K562 (cell line): ENCODE measurements at regions of chr11 and their contacts with region 1.

Region 1: GRCh38 chr11:46845740-46846509 is at the start of gene CKAP5:
- DNase-seq: peak; percentile 94 to 99 (median 94)
- ATAC-seq: peak; percentile 95
- H3K4me3 ChIP-seq: peak within 1 kb of the TSS; percentile 76
- H3K27ac ChIP-seq: peak within 1 kb of the TSS; percentile 93
- H3K4me1 ChIP-seq: peaks cover 6 to 18% of the 10 kb centered on the region in 2 experiments; a peak in 3 of 5 replicates
- H3K27me3 ChIP-seq: no peaks in the 10 kb centered on the region
- CTCF ChIP-seq: 0 out of 6 replicates have a peak, but pooled peaks of 2 of the 3 experiments have one; percentile 0 to 6
- EP300 ChIP-seq: peak; percentile 25
- POLR2A ChIP-seq: peak; percentile 90
- RAD21 ChIP-seq: no peak
- polyA plus RNA-seq, gene CKAP5: 60.1 to 75.7 TPM

Region 2: GRCh38 chr11:46826310-46827044 is 19.4 kb before region 1 on chr11:
- CTCF ChIA-PET with region 1: no interaction called
- POLR2A ChIA-PET with region 1: interaction called, 4 read pairs
- in situ Hi-C with region 1: no loop called
- intact Hi-C with region 1: loop called (anchors 2 kb)
- DNase-seq: peak; percentile 75 to 87 (median 80)
- ATAC-seq: peak; percentile 100
- H3K4me3 ChIP-seq: peak overlapping the region; percentile 49
- H3K27ac ChIP-seq: 0 out of 3 replicates have a peak overlapping the region, but pooled peaks have one; percentile 17
- H3K4me1 ChIP-seq: peaks cover 17 to 19% of the 10 kb centered on the region in 2 experiments; a peak in 4 of 5 replicates
- H3K27me3 ChIP-seq: no peaks in the 10 kb centered on the region
- CTCF ChIP-seq: peak in 1 of 3 experiments; percentile 9; a peak in 1 of 6 replicates
- EP300 ChIP-seq: no peak
- POLR2A ChIP-seq: no peak
- RAD21 ChIP-seq: no peak

Region 3: DNA sequence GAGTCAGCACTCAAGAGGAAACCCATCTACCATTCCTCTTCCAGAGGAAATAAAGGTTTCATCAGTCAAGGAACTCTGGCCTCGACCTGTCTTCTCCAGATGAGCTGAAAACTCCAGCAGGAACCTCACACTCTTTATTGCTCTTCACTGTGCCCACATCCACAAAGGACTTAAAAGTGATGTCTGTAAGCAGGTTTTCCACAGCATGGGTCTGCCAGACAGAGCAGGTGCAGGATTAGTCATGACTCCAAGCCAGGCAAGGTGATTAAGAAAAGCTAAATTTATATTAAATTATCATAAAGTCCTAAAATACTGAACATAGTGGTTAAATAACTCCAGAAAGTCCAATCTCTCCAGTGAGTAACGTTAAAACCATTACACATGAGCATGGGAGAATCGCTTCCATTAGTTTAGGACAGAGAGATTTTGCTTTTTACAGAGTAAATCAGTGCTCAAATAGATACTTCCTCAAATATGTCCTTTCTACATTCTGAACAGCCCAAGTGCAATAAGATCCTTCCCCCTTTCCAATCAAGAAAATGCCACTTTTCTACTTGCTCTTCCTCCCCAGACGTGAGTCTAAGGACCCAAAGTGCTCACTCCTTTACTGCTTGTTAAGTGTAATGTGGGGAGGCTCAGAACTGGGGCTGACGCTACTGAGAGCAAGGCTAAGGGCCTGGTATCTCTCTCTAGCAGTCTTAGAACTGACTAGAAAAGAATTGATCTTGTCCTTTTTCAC is 10.8 kb after region 1 on chr11:
- CTCF ChIA-PET with region 1: no interaction called
- POLR2A ChIA-PET with region 1: interaction called, 11 read pairs
- in situ Hi-C with region 1: no loop called
- intact Hi-C with region 1: no loop called
- DNase-seq: no peak
- ATAC-seq: no peak; the same call in 2 of the 3 replicates
- H3K4me3 ChIP-seq: no peak overlapping the region
- H3K27ac ChIP-seq: no peak overlapping the region
- H3K4me1 ChIP-seq: peaks cover 0 to 14% of the 10 kb centered on the region in 2 experiments; a peak in 2 of 5 replicates
- H3K27me3 ChIP-seq: no peaks in the 10 kb centered on the region
- CTCF ChIP-seq: no peak
- EP300 ChIP-seq: no peak
- POLR2A ChIP-seq: no peak
- RAD21 ChIP-seq: no peak